Panc1 (cell line): ENCODE measurements at regions of chr15 and their contacts with region 1.

Region 1: DNA sequence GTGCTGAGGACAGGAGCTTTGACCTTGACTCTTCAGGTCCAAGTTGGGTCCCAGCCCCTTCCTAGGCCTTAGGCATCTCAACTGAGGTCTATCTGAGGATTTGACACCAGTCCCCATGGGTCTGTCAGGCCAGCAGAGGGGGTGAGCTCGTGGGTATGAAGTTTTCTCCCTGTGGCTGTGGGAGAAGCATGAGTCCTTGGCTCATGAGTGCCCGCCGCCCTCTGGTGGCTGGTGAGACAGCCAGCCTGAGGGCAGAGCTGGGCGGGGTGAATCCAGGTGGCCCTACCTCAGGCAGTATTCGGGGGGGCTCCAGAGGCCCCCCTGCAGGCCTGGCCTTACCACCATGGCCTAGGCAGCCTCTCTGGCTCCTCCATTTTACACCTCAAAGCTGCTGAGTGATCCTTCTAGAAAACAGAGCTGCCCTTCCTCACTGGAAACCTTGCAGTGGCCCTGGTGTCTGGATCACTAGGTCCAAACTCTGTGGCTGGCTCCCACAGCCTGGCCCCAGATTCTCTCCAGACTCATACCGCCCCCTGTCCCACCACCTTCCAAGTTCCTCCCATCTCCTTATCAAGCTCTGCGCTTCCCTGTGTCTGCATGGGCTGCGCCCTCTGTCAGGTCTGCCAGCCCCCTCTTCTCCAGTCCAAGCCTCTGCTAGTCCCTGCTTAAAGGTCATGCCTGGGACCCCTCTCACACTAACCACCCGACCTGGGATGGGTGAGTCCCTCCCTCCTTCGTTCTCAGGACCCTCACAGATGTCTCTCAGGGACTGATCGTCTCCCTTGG is 16.1 kb downstream of the SH2D7 start:
- DNase-seq: peak; percentile 38
- ATAC-seq: peak; percentile 92
- H3K4me3 ChIP-seq: no peak overlapping the region
- H3K27ac ChIP-seq: no peak overlapping the region
- H3K4me1 ChIP-seq: no peaks in the 10 kb centered on the region
- H3K27me3 ChIP-seq: no peaks in the 10 kb centered on the region
- CTCF ChIP-seq: peak; percentile 95

Region 2: GRCh38 chr15:77688693-77689092 is 419.8 kb before region 1 on chr15:
- CTCF ChIA-PET with region 1: no interaction called
- POLR2A ChIA-PET with region 1: no interaction called
- in situ Hi-C with region 1: no loop called
- intact Hi-C with region 1: no loop called
- DNase-seq: no peak
- ATAC-seq: no peak
- H3K4me3 ChIP-seq: no peak overlapping the region
- H3K27ac ChIP-seq: no peak overlapping the region
- H3K4me1 ChIP-seq: no peaks in the 10 kb centered on the region
- H3K27me3 ChIP-seq: no peaks in the 10 kb centered on the region
- CTCF ChIP-seq: no peak

Region 3: DNA sequence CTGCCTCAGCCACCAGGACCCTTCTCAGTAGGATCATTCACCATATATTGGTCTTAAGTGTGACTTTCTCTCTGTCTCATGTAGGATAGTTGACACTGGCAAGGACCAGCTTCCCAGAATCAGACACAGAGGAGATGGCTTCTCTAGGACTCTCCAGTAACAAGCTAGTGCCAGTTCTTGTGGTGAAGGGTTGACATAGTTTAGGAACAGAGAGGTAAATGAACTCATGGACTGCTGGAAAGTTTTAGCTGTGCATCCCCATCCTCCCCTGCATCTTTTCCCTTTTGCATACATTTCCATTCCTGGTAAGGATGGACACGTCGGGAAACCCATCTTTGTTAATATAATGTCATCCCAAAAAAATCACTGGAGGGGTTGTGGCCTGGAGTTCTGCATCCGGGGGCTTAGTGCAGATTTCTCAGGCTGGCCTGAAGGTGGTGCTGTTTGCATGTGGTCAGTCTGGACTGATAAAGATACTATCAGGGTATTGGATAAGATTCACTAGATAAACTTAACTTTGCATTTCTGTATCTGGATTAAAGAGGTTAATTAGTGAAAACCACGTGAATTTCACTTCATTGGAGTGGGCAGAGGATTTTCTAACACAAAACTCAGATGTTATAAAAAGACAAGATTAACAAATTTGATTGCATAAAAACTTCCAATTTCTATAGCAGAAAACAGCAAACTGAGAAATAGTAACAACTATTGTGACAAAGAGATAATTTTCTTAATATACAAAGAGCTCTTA is 141.8 kb before region 1 on chr15:
- CTCF ChIA-PET with region 1: interaction called, 9 read pairs
- POLR2A ChIA-PET with region 1: no interaction called
- in situ Hi-C with region 1: no loop called
- intact Hi-C with region 1: loop called (anchors 1 kb)
- DNase-seq: no peak
- ATAC-seq: peak; percentile 95
- H3K4me3 ChIP-seq: no peak overlapping the region
- H3K27ac ChIP-seq: no peak overlapping the region
- H3K4me1 ChIP-seq: no peaks in the 10 kb centered on the region
- H3K27me3 ChIP-seq: no peaks in the 10 kb centered on the region
- CTCF ChIP-seq: peak; percentile 92

Region 4: DNA sequence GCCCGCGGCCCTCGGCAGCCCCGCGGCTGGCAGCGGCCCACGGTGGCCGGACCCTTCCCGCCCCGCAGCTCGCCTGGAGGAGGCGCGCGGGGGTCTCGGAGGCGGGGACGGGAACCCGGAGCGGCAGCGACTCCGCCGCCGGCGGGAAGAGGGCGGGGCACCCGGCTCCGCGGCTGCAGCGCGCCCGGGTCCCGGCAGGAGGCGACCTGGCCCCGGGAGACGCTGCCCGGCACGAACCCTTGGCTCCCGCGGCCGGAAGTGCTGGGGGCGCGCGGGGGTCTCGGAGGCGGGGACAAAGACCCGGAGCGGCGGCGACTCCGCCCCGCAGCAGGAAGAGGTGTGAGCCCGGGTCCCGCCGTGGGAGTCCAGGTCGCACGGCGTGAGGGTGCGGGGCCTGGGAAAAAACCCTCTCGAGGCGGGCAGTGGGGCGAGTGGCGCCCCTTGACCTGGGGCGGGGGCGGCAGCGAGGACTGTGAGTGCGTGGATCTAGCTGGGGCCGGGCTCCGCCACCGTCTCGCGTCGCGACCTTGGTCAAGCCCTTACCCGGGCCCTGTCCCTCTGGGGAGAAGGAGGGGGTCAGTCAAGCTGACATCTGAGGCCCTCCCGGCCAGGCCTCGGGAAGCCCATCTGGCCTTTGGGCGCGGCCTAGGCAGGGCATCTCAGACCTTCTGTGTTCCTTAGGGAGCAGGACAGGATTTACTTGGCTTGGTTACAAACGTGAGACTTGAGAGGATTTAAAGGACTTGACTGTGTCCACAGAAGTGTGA is 23.0 kb after region 1 on chr15 and contains the start of gene CIB2:
- CTCF ChIA-PET with region 1: interaction called, 12 read pairs
- POLR2A ChIA-PET with region 1: interaction called, 4 read pairs
- in situ Hi-C with region 1: no loop called
- intact Hi-C with region 1: no loop called
- DNase-seq: no peak
- ATAC-seq: peak; percentile 93
- H3K4me3 ChIP-seq: peak within 1 kb of the TSS; percentile 68 to 78
- H3K27ac ChIP-seq: peak within 1 kb of the TSS; percentile 90
- H3K4me1 ChIP-seq: peaks cover 3% of the 10 kb centered on the region; the same call in 1 of the 2 replicates
- H3K27me3 ChIP-seq: no peaks in the 10 kb centered on the region
- CTCF ChIP-seq: peak; percentile 96
- total RNA-seq, gene CIB2: 37.3 TPM

Region 5: GRCh38 chr15:78195735-78196201 is 87.3 kb after region 1 on chr15:
- CTCF ChIA-PET with region 1: interaction called, 13 read pairs
- POLR2A ChIA-PET with region 1: no interaction called
- in situ Hi-C with region 1: no loop called
- intact Hi-C with region 1: loop called (anchors 5 kb)
- DNase-seq: no peak
- ATAC-seq: peak; percentile 95
- H3K4me3 ChIP-seq: no peak overlapping the region
- H3K27ac ChIP-seq: no peak overlapping the region
- H3K4me1 ChIP-seq: no peaks in the 10 kb centered on the region
- H3K27me3 ChIP-seq: no peaks in the 10 kb centered on the region
- CTCF ChIP-seq: peak; percentile 92